Activated CD8-positive, alpha-beta memory T cell treated with anti-CD3 and anti-CD28 coated beads, Interleukin-2, amount 10 ng/mL, durations not matched to agents 7 days and 5 days (primary cell): ENCODE measurements at regions of chr2 and their contacts with region 1.

Region 1: GRCh38 chr2:69628325-69629021 is 15.1 kb downstream of the AAK1 start:
- DNase-seq: no peak
- ATAC-seq: peak; percentile 72
- H3K4me3 Mint-ChIP-seq: no peak overlapping the region
- H3K27ac Mint-ChIP-seq: no peak overlapping the region
- H3K4me1 Mint-ChIP-seq: peaks cover 22% of the 10 kb centered on the region
- H3K27me3 Mint-ChIP-seq: no peaks in the 10 kb centered on the region

Region 2: DNA sequence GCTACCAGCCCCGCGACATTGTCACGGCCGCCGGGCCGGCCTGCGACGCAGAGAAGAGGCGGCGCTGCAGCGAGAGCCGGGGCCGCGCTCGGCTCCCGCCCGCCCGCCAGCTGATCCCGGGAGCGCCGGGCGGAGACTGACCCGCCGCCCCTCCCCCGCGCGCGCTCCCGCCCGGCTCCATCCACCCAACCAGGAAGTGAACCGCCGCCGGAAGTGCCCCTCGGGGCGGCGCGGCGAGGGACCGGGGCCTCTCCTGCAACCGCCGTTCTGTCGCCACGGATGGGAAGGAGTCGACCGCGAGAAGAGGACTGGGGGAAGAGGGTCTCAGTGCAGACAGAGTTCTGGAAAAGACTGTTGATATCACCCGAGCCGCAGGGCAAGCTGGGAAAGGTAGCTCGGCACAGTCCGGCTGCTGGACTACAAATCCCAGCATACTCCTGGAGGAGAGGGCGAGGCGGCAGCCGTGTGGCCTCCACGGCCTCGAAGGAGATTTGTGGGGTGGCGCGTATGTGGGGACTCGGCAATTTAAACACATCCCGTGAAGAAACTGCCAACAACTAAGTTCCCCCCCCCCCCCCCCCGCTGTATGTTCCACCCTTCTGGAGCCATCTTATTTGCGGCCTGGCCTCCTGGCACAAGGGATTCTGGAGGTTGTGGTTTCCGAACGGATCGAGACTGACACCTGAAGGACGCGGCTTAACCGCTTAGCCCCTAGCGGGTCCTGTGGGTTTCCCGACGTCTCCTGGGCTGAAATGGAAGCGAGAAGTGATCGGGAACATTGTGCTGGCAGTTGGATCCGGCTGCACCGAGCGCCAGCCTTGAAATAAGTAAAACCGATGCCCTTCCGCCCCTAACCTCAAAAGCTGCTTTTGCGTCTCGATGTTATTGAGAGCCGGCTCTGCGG is 15.4 kb after region 1 on chr2 and contains the start of gene AAK1:
- CTCF ChIA-PET with region 1: interaction called, 13 read pairs
- DNase-seq: peak; percentile 93
- ATAC-seq: peak; percentile 65
- H3K4me3 Mint-ChIP-seq: peak within 1 kb of the TSS; percentile 84
- H3K27ac Mint-ChIP-seq: peak within 1 kb of the TSS; percentile 95
- H3K4me1 Mint-ChIP-seq: peaks cover 63% of the 10 kb centered on the region
- H3K27me3 Mint-ChIP-seq: no peaks in the 10 kb centered on the region
- total RNA-seq, gene AAK1: 94.0 to 99.5 TPM